PC-3 (cell line): ENCODE measurements at regions of chr16 and their contacts with region 1.

Region 1: DNA sequence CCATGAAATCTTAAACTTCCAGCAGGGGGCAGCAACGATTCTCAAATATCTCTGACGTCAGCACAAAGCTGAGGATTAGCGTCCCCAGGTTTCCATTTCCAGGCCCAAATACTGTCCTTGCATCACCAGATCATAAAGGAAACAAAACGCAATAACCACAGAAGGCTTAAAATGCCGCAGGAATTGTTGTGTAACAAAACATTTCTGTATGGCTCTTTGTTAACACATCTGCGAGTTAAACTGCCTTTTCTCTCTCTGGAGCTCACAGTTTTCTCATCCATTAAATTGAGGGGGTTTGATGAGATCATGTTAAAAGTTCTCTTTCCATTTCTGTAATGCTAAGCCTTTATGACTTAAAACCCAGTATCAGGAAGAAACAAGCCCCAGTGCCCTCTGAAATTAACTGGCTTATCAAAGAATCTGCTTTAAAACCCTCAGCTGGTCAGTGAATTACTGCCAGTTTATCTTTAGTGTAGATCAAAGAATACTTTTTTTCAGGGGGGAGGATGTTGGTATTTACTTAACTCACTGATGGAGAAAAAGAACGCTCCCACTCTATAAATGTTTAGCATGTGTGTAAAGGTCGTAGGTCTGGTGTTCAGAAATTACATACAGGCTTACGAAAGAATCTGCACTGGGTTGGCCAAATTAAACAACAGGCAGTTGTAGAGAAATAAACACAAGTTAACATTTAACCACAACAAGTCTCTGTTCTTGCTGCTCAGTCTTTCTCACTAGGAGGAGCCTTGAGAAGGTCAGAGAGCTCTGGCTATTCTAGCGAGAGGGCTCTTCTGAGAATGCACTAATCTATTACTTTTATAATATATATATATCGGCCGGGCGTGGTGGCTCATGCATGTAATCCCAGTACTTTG is 10.6 kb upstream of the TERF2 start:
- DNase-seq: peak; percentile 83
- ATAC-seq: peak; percentile 52
- H3K4me3 ChIP-seq: peak overlapping the region; percentile 26; the same call in 1 of the 2 replicates
- H3K27ac ChIP-seq: peak overlapping the region; percentile 79
- H3K4me1 ChIP-seq: peaks cover 29% of the 10 kb centered on the region
- H3K27me3 ChIP-seq: no peaks in the 10 kb centered on the region
- CTCF ChIP-seq: peak; percentile 71

Region 2: GRCh38 chr16:69367980-69368379 is 28.4 kb before region 1 on chr16:
- CTCF ChIA-PET with region 1: no interaction called
- POLR2A ChIA-PET with region 1: no interaction called
- intact Hi-C with region 1: no loop called
- DNase-seq: no peak
- ATAC-seq: no peak
- H3K4me3 ChIP-seq: no peak overlapping the region
- H3K27ac ChIP-seq: no peak overlapping the region
- H3K4me1 ChIP-seq: no peaks in the 10 kb centered on the region
- H3K27me3 ChIP-seq: no peaks in the 10 kb centered on the region
- CTCF ChIP-seq: no peak

Region 3: DNA sequence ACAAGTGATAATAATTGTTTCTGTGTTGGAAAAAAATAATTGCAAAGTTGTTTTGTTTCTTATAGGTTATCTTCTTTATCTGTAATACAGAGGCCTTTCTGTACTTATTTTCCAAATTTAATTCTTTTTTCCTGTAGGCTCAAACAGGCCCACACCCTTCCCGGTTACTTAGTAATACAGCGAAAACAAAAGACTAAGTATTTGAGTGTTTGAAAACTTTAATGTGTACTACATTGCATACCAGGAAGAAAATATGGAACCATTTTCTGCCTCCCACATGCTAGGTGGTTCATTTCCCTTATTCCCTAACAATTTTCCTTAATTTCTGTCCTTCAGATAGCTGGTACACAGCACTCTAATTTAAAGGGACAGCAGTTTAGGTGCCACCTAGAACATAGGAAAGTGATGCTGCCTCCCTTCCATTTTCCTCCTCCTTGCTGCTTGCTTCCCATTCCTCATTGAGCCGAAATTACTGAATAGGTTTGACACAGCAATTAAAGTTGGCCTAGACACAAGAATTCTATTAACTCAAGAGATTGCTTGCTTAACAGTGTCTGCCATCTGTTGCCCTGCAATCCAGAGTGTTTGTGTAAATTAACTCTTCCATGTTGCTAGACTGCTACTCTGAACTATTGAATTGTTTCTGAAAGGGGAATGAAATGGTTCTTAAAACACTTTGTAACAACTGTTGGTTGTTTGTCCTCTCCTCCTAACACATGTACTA is 52.2 kb after region 1 on chr16:
- CTCF ChIA-PET with region 1: no interaction called
- POLR2A ChIA-PET with region 1: no interaction called
- intact Hi-C with region 1: loop called (anchors 5 kb)
- DNase-seq: no peak
- ATAC-seq: no peak
- H3K4me3 ChIP-seq: no peak overlapping the region
- H3K27ac ChIP-seq: no peak overlapping the region
- H3K4me1 ChIP-seq: peaks cover 16% of the 10 kb centered on the region
- H3K27me3 ChIP-seq: no peaks in the 10 kb centered on the region
- CTCF ChIP-seq: no peak

Region 4: DNA sequence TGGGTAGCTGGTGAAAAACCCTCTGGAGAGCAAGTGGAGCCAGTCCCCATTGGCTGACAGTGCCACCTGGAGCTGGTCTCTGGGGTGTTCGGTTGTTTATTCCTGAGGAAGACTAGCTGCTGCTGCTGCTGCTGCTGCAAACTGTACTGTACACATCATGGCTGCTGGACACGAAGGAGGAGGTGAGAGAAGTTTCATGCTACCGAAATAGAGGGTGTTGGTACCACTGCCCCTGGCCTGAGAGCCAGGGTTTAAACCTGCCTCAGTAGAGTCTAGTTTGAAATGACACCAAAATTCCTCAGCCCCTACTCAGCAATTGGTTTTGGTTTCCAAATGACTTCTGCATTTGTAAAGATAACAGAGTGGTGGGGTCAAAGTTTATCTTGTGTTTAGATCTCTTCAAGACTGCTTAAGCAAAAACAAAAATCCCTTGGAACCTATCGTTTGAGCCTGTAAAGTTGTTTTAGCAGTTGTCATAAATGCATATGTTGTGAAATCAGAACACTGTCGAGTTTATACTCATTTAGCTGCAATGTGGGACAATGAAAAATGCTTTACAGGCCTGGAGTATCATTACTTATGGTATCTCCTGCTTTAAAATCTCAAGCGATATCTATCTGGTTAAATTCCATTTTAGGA is 68.8 kb after region 1 on chr16:
- CTCF ChIA-PET with region 1: interaction called, 4 read pairs
- POLR2A ChIA-PET with region 1: no interaction called
- intact Hi-C with region 1: loop called (anchors 2 kb)
- DNase-seq: no peak
- ATAC-seq: peak; percentile 44
- H3K4me3 ChIP-seq: no peak overlapping the region
- H3K27ac ChIP-seq: no peak overlapping the region
- H3K4me1 ChIP-seq: peaks cover 21% of the 10 kb centered on the region
- H3K27me3 ChIP-seq: no peaks in the 10 kb centered on the region
- CTCF ChIP-seq: peak; percentile 35; the same call in 1 of the 2 replicates

Region 5: GRCh38 chr16:69565671-69566239 is 169.3 kb after region 1 on chr16 and contains the start of gene NFAT5:
- CTCF ChIA-PET with region 1: interaction called, 5 read pairs
- POLR2A ChIA-PET with region 1: no interaction called
- intact Hi-C with region 1: loop called (anchors 1 kb)
- DNase-seq: peak; percentile 82
- ATAC-seq: peak; percentile 79
- H3K4me3 ChIP-seq: peak within 1 kb of the TSS; percentile 88
- H3K27ac ChIP-seq: peak within 1 kb of the TSS; percentile 81
- H3K4me1 ChIP-seq: peaks cover 23% of the 10 kb centered on the region
- H3K27me3 ChIP-seq: no peaks in the 10 kb centered on the region
- CTCF ChIP-seq: no peak
- total RNA-seq, gene NFAT5: 11.4 and 14.3 TPM in 2 replicates

Region 6: GRCh38 chr16:69613378-69614154 is 217.1 kb after region 1 on chr16:
- CTCF ChIA-PET with region 1: no interaction called
- POLR2A ChIA-PET with region 1: no interaction called
- intact Hi-C with region 1: no loop called
- DNase-seq: peak; percentile 67
- ATAC-seq: peak; percentile 97
- H3K4me3 ChIP-seq: no peak overlapping the region
- H3K27ac ChIP-seq: peak overlapping the region; percentile 52
- H3K4me1 ChIP-seq: peaks cover 17% of the 10 kb centered on the region
- H3K27me3 ChIP-seq: no peaks in the 10 kb centered on the region
- CTCF ChIP-seq: no peak

Region 7: DNA sequence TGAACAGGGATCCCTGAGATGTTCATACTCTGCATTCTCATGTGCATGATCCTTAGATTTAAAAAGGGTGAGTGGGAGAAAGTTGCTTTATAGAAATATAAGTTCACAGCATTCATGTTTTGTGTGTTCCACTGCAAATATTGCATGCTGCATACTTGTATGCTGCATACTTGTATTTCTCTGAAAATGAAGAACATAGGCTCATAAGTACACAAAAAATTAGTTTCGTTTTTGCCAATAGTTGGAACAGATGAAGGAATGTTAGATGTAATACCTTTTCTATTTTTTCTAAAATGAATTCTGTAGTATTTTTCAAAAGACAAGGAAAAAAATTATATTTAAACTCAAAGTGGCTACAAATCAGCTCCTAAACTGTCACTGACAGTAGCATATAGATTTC is 248.4 kb after region 1 on chr16:
- CTCF ChIA-PET with region 1: no interaction called
- POLR2A ChIA-PET with region 1: no interaction called
- intact Hi-C with region 1: loop called (anchors 10 kb)
- DNase-seq: no peak
- ATAC-seq: no peak
- H3K4me3 ChIP-seq: no peak overlapping the region
- H3K27ac ChIP-seq: no peak overlapping the region
- H3K4me1 ChIP-seq: no peaks in the 10 kb centered on the region
- H3K27me3 ChIP-seq: no peaks in the 10 kb centered on the region
- CTCF ChIP-seq: no peak

Region 8: GRCh38 chr16:69709456-69710084 is 313.1 kb after region 1 on chr16:
- CTCF ChIA-PET with region 1: interaction called, 4 read pairs
- POLR2A ChIA-PET with region 1: no interaction called
- intact Hi-C with region 1: loop called (anchors 5 kb)
- DNase-seq: peak; percentile 75
- ATAC-seq: peak; percentile 53
- H3K4me3 ChIP-seq: no peak overlapping the region
- H3K27ac ChIP-seq: no peak overlapping the region
- H3K4me1 ChIP-seq: peaks cover 8% of the 10 kb centered on the region
- H3K27me3 ChIP-seq: no peaks in the 10 kb centered on the region
- CTCF ChIP-seq: peak; percentile 75

Region 9: GRCh38 chr16:69754469-69755310 is 358.3 kb after region 1 on chr16 and contains the start of gene NOB1:
- CTCF ChIA-PET with region 1: interaction called, 7 read pairs
- POLR2A ChIA-PET with region 1: no interaction called
- intact Hi-C with region 1: loop called (anchors 10 kb)
- DNase-seq: peak; percentile 95
- ATAC-seq: peak; percentile 92
- H3K4me3 ChIP-seq: peak within 1 kb of the TSS; percentile 98
- H3K27ac ChIP-seq: peak within 1 kb of the TSS; percentile 49
- H3K4me1 ChIP-seq: peaks cover 6% of the 10 kb centered on the region
- H3K27me3 ChIP-seq: no peaks in the 10 kb centered on the region
- CTCF ChIP-seq: peak; percentile 82
- total RNA-seq, gene NOB1: 31.9 and 45.1 TPM in 2 replicates